Posterior cingulate gyrus (tissue), 11 donors: ENCODE measurements at regions of chr14 and their contacts with region 1.

Region 1: GRCh38 chr14:58637391-58638230 is at the start of gene DACT1:
- DNase-seq: peak in 9 of 10 donors; percentile 31 to 93 (median 63)

Region 2: GRCh38 chr14:58501214-58501816 is 136.3 kb before region 1 on chr14:
- intact Hi-C with region 1: loop called (anchors 5 kb)
- DNase-seq: peak in 1 of 10 donors; percentile 28

Region 3: GRCh38 chr14:58812050-58812910 is 174.7 kb after region 1 on chr14:
- intact Hi-C with region 1: loop called (anchors 5 kb)
- DNase-seq: no peak

Region 4: GRCh38 chr14:59055439-59056045 is 417.9 kb after region 1 on chr14:
- intact Hi-C with region 1: loop called (anchors 2 kb)
- DNase-seq: peak in 2 of 10 donors; percentile 20 to 33

Region 5: DNA sequence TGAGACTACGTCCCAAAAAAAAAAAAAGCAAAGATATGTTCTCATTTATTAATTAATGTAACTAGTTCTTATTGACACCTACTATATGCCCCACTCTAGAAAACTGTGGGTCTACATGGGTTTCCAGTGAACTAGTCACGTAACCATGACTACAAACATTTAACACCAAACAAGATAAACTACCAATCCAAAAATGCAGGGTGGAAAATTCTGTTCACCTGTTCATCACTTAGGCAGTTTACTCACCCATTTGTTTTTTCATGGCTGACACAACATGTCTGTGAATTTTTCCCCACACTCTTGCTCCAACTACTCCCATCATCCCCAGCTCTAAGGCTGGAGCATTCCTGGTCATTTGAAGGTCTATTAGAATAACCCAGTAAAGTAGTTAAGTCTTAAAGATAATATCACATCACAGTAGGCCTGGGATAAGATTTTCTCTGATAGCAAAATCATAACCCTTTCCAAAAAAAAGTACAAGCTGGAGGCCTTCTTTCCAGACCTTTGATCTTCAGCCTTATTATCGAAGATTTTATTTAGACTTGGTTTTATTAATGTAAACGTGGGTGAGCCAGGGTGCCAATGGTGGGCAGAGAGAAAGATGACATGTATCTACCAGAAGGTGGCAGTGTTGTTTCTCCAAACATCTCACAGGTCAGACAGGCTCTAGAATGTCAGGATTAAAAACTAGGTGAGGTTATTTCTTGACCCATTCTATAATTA is 489.3 kb after region 1 on chr14:
- intact Hi-C with region 1: loop called (anchors 10 kb)
- DNase-seq: peak in 1 of 10 donors; percentile 9